ENCODE measurements at regions of chr7 and their contacts with region 1.

Region 1: GRCh38 chr7:129218514-129219062 is 6.2 kb upstream of the AHCYL2 start:
- DNase-seq: no peak
- ATAC-seq: peak; percentile 96
- H3K4me3 ChIP-seq: no peak overlapping the region
- H3K27ac ChIP-seq: no peak overlapping the region
- H3K4me1 ChIP-seq: no peaks in the 10 kb centered on the region
- H3K27me3 ChIP-seq: no peaks in the 10 kb centered on the region
- CTCF ChIP-seq: peak; percentile 84 to 93 (median 84)
- EP300 ChIP-seq: no peak
- POLR2A ChIP-seq: no peak
- RAD21 ChIP-seq: peak; percentile 94

Region 2: GRCh38 chr7:128963327-128963757 is 255.2 kb before region 1 on chr7:
- CTCF ChIA-PET with region 1: no interaction called
- POLR2A ChIA-PET with region 1: no interaction called
- RAD21 ChIA-PET with region 1: no interaction called
- SMC1A ChIA-PET with region 1: interaction called, 3 read pairs
- in situ Hi-C with region 1: no loop called
- intact Hi-C with region 1: loop called (anchors 10 kb)
- DNase-seq: peak; percentile 79
- ATAC-seq: peak; percentile 98
- H3K4me3 ChIP-seq: no peak overlapping the region; the same call in 1 of the 2 replicates
- H3K27ac ChIP-seq: peak overlapping the region; percentile 75
- H3K4me1 ChIP-seq: peaks cover 18% of the 10 kb centered on the region
- H3K27me3 ChIP-seq: no peaks in the 10 kb centered on the region
- CTCF ChIP-seq: no peak
- EP300 ChIP-seq: peak; percentile 65 to 75; a peak in 3 of 4 replicates
- POLR2A ChIP-seq: no peak
- RAD21 ChIP-seq: no peak

Region 3: DNA sequence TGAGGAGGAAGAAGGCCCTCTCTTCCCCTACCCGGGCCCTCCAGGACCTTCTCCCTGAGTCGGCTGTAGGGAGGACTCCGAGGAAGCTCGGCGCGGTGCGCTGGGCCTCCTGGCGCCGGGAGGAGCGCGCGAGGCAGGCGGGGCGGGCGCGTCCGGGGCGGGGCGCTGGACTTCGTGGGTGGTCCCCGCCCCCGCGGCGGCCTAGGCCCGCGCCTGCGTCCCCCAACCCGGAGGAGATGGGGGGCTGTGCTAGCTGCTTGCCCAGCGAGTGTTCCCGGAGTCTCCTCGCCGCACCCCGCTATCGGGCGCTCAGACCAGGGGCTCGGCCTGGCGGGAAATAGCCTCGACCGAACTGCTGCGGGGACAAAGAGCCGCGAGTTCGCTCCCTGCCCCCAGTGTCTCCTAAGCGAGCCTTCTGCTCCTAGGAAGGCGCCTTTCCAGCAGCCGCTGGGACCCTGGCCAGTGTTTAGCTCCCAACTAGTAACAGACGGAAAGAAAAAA is 49.4 kb before region 1 on chr7:
- CTCF ChIA-PET with region 1: interaction called, 109 read pairs
- POLR2A ChIA-PET with region 1: no interaction called
- RAD21 ChIA-PET with region 1: interaction called, 67 read pairs
- SMC1A ChIA-PET with region 1: interaction called, 7 read pairs
- in situ Hi-C with region 1: no loop called
- intact Hi-C with region 1: no loop called
- DNase-seq: no peak
- ATAC-seq: peak; percentile 78
- H3K4me3 ChIP-seq: peak overlapping the region; percentile 52
- H3K27ac ChIP-seq: peak overlapping the region; percentile 77
- H3K4me1 ChIP-seq: peaks cover 33% of the 10 kb centered on the region
- H3K27me3 ChIP-seq: no peaks in the 10 kb centered on the region
- CTCF ChIP-seq: no peak
- EP300 ChIP-seq: no peak
- POLR2A ChIP-seq: peak; percentile 80
- RAD21 ChIP-seq: no peak

Region 4: GRCh38 chr7:129258649-129259389 is 40.2 kb after region 1 on chr7:
- CTCF ChIA-PET with region 1: interaction called, 16 read pairs
- POLR2A ChIA-PET with region 1: no interaction called
- RAD21 ChIA-PET with region 1: interaction called, 8 read pairs
- SMC1A ChIA-PET with region 1: interaction called, 7 read pairs
- in situ Hi-C with region 1: no loop called
- intact Hi-C with region 1: no loop called
- DNase-seq: no peak
- ATAC-seq: no peak
- H3K4me3 ChIP-seq: no peak overlapping the region
- H3K27ac ChIP-seq: no peak overlapping the region
- H3K4me1 ChIP-seq: peaks cover 3% of the 10 kb centered on the region; the same call in 1 of the 2 replicates
- H3K27me3 ChIP-seq: no peaks in the 10 kb centered on the region
- CTCF ChIP-seq: no peak
- EP300 ChIP-seq: no peak
- POLR2A ChIP-seq: no peak
- RAD21 ChIP-seq: no peak

Region 5: DNA sequence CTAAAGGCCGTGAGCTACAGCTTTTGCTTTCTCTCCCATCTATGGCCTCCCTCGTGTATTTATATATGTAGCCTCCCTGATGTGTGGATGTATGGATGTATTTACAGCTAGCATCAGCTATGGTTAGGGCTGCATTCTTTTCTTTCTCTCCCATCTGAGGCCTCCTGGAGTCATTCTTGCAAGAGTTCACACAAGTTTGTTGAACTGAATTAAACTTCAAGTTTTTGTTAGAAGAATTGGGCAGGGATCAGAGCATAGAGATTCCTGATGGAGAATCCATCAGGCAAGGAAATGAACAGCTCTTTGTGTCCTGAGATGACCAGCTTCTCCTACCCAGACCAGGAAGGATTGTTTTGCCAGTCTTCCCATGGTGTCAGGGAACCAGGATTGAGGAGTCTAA is 66.5 kb after region 1 on chr7:
- CTCF ChIA-PET with region 1: interaction called, 23 read pairs
- POLR2A ChIA-PET with region 1: no interaction called
- RAD21 ChIA-PET with region 1: interaction called, 4 read pairs
- SMC1A ChIA-PET with region 1: no interaction called
- in situ Hi-C with region 1: no loop called
- intact Hi-C with region 1: no loop called
- DNase-seq: no peak
- ATAC-seq: no peak
- H3K4me3 ChIP-seq: no peak overlapping the region
- H3K27ac ChIP-seq: no peak overlapping the region
- H3K4me1 ChIP-seq: no peaks in the 10 kb centered on the region
- H3K27me3 ChIP-seq: no peaks in the 10 kb centered on the region
- CTCF ChIP-seq: no peak
- EP300 ChIP-seq: no peak
- POLR2A ChIP-seq: no peak
- RAD21 ChIP-seq: no peak

Region 6: DNA sequence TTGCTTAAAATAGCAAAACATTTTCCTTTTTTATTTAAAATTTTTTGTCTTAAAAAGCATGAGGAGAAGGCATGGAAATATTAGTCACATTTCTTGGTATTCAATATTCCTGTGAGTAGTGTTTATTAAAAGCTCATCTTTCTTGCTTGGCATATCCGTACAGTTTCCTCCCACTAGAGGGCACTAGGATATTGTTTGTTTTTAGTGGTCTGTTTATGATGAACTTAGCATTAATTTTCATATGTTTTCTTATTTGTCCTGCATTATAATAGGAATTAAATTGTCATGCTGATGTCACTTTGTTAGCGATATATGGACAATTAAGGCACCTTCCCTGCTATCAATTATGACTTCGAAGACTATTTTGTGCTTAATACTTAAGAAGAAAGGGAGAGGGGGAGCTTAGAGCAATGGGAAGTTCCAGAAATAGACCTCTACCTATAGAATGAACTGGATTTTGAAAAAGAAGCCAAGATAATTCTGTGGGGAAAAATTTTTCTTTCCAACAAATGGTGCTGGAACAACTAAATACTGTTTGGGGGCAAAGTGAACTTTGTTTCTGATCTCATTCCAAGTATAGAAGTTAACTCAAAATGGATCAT is 124.6 kb after region 1 on chr7:
- CTCF ChIA-PET with region 1: interaction called, 6 read pairs
- POLR2A ChIA-PET with region 1: no interaction called
- RAD21 ChIA-PET with region 1: interaction called, 4 read pairs
- SMC1A ChIA-PET with region 1: interaction called, 13 read pairs
- in situ Hi-C with region 1: no loop called
- intact Hi-C with region 1: no loop called
- DNase-seq: no peak
- ATAC-seq: peak; percentile 84
- H3K4me3 ChIP-seq: no peak overlapping the region
- H3K27ac ChIP-seq: no peak overlapping the region
- H3K4me1 ChIP-seq: peaks cover 20% of the 10 kb centered on the region
- H3K27me3 ChIP-seq: no peaks in the 10 kb centered on the region
- CTCF ChIP-seq: peak; percentile 64 to 67 (median 65)
- EP300 ChIP-seq: no peak
- POLR2A ChIP-seq: no peak
- RAD21 ChIP-seq: peak; percentile 80

Region 7: DNA sequence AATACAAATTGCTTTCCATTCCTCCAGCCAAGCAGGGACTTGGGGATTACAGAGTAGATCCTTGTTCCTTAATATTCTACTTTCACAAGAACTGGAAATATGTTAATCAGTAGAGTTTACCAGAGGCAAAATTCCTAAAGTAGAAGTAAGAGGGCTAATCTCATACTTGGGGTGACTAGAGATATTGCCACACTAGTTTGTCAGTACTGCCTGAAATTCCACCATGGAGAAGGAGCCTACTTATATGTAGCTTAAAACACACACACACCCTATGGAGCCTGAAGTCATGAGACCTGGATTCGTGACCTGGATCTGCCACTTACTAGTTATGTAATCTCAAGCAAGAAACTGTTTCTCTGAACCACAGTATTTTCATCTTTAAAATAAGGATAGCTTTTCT is 249.5 kb after region 1 on chr7:
- CTCF ChIA-PET with region 1: interaction called, 42 read pairs
- POLR2A ChIA-PET with region 1: no interaction called
- RAD21 ChIA-PET with region 1: interaction called, 21 read pairs
- SMC1A ChIA-PET with region 1: interaction called, 37 read pairs
- in situ Hi-C with region 1: no loop called
- intact Hi-C with region 1: loop called (anchors 1 kb)
- DNase-seq: no peak
- ATAC-seq: no peak
- H3K4me3 ChIP-seq: no peak overlapping the region
- H3K27ac ChIP-seq: no peak overlapping the region
- H3K4me1 ChIP-seq: no peaks in the 10 kb centered on the region
- H3K27me3 ChIP-seq: no peaks in the 10 kb centered on the region
- CTCF ChIP-seq: no peak
- EP300 ChIP-seq: no peak
- POLR2A ChIP-seq: no peak
- RAD21 ChIP-seq: no peak

Region 8: GRCh38 chr7:129502376-129502776 is 283.8 kb after region 1 on chr7 and contains the start of gene SMKR1:
- CTCF ChIA-PET with region 1: no interaction called
- POLR2A ChIA-PET with region 1: no interaction called
- RAD21 ChIA-PET with region 1: no interaction called
- SMC1A ChIA-PET with region 1: no interaction called
- in situ Hi-C with region 1: no loop called
- intact Hi-C with region 1: no loop called
- DNase-seq: peak; percentile 12
- ATAC-seq: peak; percentile 95
- H3K4me3 ChIP-seq: peak within 1 kb of the TSS; percentile 61; the same call in 1 of the 2 replicates
- H3K27ac ChIP-seq: no peak within 1 kb of the TSS
- H3K4me1 ChIP-seq: peaks cover 17% of the 10 kb centered on the region; the same call in 1 of the 2 replicates
- H3K27me3 ChIP-seq: no peaks in the 10 kb centered on the region; a peak in 1 of 4 replicates
- CTCF ChIP-seq: no peak
- EP300 ChIP-seq: no peak
- POLR2A ChIP-seq: peak; percentile 76
- RAD21 ChIP-seq: no peak
- polyA plus RNA-seq, gene SMKR1: 0.63 to 0.69 TPM

Measured in GM12878 (cell line).